ENCODE measurements at regions of chr7 and their contacts with region 1.

Region 1: DNA sequence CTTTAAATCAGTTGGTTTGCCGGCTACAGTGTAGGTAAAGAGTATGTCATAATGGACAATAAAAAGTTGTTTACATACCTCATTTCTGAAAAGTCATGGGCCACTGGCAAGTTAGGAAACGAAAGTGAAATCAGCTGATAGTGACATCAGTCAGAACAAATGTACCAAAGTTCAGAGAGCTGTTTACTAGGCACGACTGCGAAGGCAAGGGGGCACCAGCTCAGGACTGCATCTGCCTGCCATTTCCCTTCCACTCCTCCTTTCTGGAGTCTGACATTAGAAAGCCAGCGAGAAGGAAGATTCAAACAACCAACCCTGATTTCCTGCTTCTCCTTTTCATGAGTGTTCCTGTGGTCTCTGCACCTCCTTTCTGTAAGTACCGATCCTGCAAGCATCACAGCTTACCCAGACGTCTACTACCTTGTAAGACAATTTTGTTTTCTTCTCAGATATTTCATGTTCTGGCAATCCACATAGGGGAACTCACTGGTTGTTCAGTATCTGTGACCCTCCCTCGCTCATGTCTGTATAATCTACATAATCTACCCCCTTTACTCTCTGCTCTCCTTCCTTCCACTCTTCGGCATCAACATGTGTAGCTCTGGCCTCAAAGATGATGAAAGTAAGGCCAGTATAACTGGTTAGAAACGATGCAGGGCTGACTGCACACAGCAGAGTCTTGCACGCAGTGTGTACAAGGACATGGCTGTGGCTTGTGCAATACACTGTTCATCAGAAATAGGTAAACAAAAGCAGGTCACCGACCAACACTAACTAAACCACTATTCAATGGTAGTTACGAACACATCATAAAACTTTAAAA is at the start of gene TMEM140:
- DNase-seq: peak; percentile 87
- ATAC-seq: peak; percentile 78
- H3K4me3 ChIP-seq: peak within 1 kb of the TSS; percentile 51 to 98 (median 72)
- H3K4me3 Mint-ChIP-seq: peak within 1 kb of the TSS; percentile 91
- H3K27ac ChIP-seq: peak within 1 kb of the TSS; percentile 86 to 90
- H3K27ac Mint-ChIP-seq: peak within 1 kb of the TSS; percentile 94
- H3K4me1 ChIP-seq: peaks cover 42 to 52% of the 10 kb centered on the region in 2 donors
- H3K4me1 Mint-ChIP-seq: peaks cover 62% of the 10 kb centered on the region
- H3K27me3 ChIP-seq: no peaks in the 10 kb centered on the region
- H3K27me3 Mint-ChIP-seq: no peaks in the 10 kb centered on the region
- CTCF ChIP-seq: no peak
- total RNA-seq, gene TMEM140: 79.1 and 84.9 TPM in 2 replicates

Region 2: GRCh38 chr7:134986363-134987251 is 161.5 kb before region 1 on chr7 and contains the start of gene AGBL3:
- CTCF ChIA-PET with region 1: interaction called, 31 read pairs
- POLR2A ChIA-PET with region 1: interaction called, 7 read pairs
- intact Hi-C with region 1: loop called (anchors 1 kb)
- DNase-seq: peak; percentile 95
- ATAC-seq: peak; percentile 86
- H3K4me3 ChIP-seq: peak within 1 kb of the TSS; percentile 69 to 97 (median 94)
- H3K4me3 Mint-ChIP-seq: peak within 1 kb of the TSS; percentile 98
- H3K27ac ChIP-seq: peak within 1 kb of the TSS; percentile 88 to 93
- H3K27ac Mint-ChIP-seq: peak within 1 kb of the TSS; percentile 98
- H3K4me1 ChIP-seq: peaks cover 4 to 5% of the 10 kb centered on the region in 2 donors
- H3K4me1 Mint-ChIP-seq: peaks cover 34% of the 10 kb centered on the region
- H3K27me3 ChIP-seq: no peaks in the 10 kb centered on the region
- H3K27me3 Mint-ChIP-seq: no peaks in the 10 kb centered on the region
- CTCF ChIP-seq: peak; percentile 92
- total RNA-seq, gene AGBL3: 10.9 and 11.1 TPM in 2 replicates

Region 3: GRCh38 chr7:135160098-135160857 is 12.2 kb after region 1 on chr7:
- CTCF ChIA-PET with region 1: interaction called, 78 read pairs
- POLR2A ChIA-PET with region 1: interaction called, 13 read pairs
- intact Hi-C with region 1: loop called (anchors 1 kb)
- DNase-seq: no peak
- ATAC-seq: peak; percentile 25
- H3K4me3 ChIP-seq: no peak overlapping the region
- H3K4me3 Mint-ChIP-seq: peak overlapping the region; percentile 78
- H3K27ac ChIP-seq: peak overlapping the region in 1 of 2 donors; percentile 59
- H3K27ac Mint-ChIP-seq: peak overlapping the region; percentile 92
- H3K4me1 ChIP-seq: peaks cover 26 to 32% of the 10 kb centered on the region in 2 donors
- H3K4me1 Mint-ChIP-seq: peaks cover 50% of the 10 kb centered on the region
- H3K27me3 ChIP-seq: no peaks in the 10 kb centered on the region
- H3K27me3 Mint-ChIP-seq: no peaks in the 10 kb centered on the region
- CTCF ChIP-seq: no peak

Region 4: DNA sequence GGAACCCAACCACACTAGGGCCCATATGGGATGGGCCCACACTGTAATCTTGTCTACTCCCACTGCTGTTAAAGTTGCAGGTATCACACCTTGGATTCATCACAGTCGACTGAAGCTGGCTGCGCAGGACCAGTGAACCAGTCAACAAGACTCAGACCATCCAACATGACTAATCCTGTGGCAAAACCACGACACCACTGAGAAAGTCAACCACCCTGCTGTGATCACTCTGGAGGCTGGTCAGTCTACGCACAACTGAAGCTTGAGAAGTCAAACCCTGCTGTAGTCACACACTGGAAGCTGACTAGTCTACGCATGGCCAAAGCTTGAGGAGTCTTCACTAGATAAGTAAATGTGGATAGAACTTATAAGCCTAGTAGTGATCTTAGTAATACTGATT is 32.0 kb after region 1 on chr7:
- CTCF ChIA-PET with region 1: no interaction called
- POLR2A ChIA-PET with region 1: no interaction called
- intact Hi-C with region 1: no loop called
- DNase-seq: no peak
- ATAC-seq: no peak
- H3K4me3 ChIP-seq: no peak overlapping the region
- H3K4me3 Mint-ChIP-seq: no peak overlapping the region
- H3K27ac ChIP-seq: no peak overlapping the region
- H3K27ac Mint-ChIP-seq: no peak overlapping the region
- H3K4me1 ChIP-seq: no peaks in the 10 kb centered on the region
- H3K4me1 Mint-ChIP-seq: no peaks in the 10 kb centered on the region
- H3K27me3 ChIP-seq: no peaks in the 10 kb centered on the region
- H3K27me3 Mint-ChIP-seq: no peaks in the 10 kb centered on the region
- CTCF ChIP-seq: no peak

Region 5: DNA sequence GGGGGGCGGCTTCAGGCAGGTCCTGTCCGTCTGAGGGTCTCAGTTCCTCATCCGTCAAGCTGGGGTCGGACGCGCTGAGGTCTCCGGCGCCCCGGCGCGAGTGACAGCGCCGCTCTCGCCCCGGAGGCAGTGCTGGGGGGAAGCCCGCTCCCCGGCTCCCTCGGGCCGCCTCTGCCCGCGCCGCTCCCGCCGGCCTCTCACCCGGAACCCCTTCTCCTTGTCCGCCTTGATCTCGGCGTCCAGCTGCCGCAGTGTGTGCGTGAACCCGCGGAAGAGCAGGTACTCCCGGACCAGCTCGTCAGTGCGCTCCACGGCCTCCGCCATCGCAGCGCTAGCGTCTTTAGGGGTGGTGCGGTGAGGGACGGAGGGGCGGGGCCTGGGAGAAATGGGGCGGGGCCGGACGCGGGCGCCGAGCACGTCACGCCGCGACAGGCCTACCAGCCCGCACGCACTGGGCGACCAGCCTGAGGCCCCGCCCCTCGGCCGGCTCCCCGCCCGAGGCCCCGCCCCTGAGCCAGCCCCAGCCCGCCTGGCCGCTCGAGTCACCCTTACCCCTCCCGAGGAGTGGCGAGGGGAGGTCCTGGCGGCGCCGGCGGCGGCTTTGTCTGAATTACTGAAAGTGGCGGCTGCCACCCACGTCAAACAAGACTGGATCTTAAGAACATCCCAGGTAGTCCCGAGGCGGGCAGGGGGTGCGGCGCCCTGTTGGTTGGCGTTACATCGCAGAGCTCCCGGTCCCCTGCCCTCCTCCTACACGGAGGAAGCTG is 63.3 kb after region 1 on chr7 and contains the start of gene WDR91:
- CTCF ChIA-PET with region 1: interaction called, 3 read pairs
- POLR2A ChIA-PET with region 1: interaction called, 6 read pairs
- intact Hi-C with region 1: loop called (anchors 1 kb)
- DNase-seq: peak; percentile 95
- ATAC-seq: peak; percentile 94
- H3K4me3 ChIP-seq: peak within 1 kb of the TSS; percentile 82 to 98 (median 88)
- H3K4me3 Mint-ChIP-seq: peak within 1 kb of the TSS; percentile 98
- H3K27ac ChIP-seq: peak within 1 kb of the TSS; percentile 77 to 92
- H3K27ac Mint-ChIP-seq: peak within 1 kb of the TSS; percentile 97
- H3K4me1 ChIP-seq: peaks cover 34 to 35% of the 10 kb centered on the region in 2 donors
- H3K4me1 Mint-ChIP-seq: peaks cover 48% of the 10 kb centered on the region
- H3K27me3 ChIP-seq: no peaks in the 10 kb centered on the region
- H3K27me3 Mint-ChIP-seq: no peaks in the 10 kb centered on the region
- CTCF ChIP-seq: no peak
- total RNA-seq, gene WDR91: 40.7 and 47.0 TPM in 2 replicates

Region 6: DNA sequence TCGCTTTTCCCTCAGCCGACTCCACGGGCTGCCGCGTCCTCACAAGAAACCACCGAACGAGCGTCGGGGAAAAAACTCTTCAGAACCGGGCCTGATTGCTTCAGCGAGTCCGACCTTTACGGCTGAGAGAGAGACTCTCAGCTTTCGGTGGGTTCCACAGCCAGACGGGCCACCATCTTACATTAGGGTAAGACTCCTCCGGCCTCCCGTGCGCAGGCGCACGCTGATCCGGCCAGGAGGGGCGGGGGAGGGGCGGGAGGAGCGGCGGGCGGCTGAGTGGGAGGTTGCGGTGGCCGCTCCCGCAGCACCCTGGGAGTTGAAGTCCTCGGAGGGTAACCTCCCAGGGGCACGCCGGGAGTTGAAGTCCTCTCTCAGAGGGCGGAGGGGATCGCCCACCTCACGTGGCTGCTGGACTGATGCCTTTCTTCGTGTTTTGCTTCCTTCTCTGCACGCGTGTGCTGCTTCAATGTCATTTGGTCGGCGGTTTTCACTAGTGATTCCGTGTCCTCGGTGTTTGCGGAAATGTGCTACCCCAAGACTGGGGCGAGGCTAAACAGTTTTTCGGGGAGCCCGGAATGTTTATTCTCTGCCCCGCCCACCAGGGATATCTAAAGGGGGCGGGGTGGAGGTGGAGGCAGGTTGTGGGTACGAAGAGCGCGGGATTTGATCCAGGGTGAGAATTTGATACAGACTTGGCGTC is 361.9 kb after region 1 on chr7 and contains the start of gene CNOT4:
- CTCF ChIA-PET with region 1: no interaction called
- POLR2A ChIA-PET with region 1: no interaction called
- intact Hi-C with region 1: loop called (anchors 5 kb)
- DNase-seq: peak; percentile 97
- ATAC-seq: peak; percentile 95
- H3K4me3 ChIP-seq: peak within 1 kb of the TSS; percentile 79 to 96 (median 89)
- H3K4me3 Mint-ChIP-seq: no peak within 1 kb of the TSS
- H3K27ac ChIP-seq: peak within 1 kb of the TSS; percentile 92 to 96
- H3K27ac Mint-ChIP-seq: no peak within 1 kb of the TSS
- H3K4me1 ChIP-seq: peaks cover 17 to 24% of the 10 kb centered on the region in 2 donors
- H3K4me1 Mint-ChIP-seq: peaks cover 10% of the 10 kb centered on the region
- H3K27me3 ChIP-seq: no peaks in the 10 kb centered on the region
- H3K27me3 Mint-ChIP-seq: no peaks in the 10 kb centered on the region
- CTCF ChIP-seq: no peak
- total RNA-seq, gene CNOT4: 52.1 and 55.1 TPM in 2 replicates